Breast epithelium (tissue), 4 donors: ENCODE measurements at regions of chr12 and their contacts with region 1.

Region 1: DNA sequence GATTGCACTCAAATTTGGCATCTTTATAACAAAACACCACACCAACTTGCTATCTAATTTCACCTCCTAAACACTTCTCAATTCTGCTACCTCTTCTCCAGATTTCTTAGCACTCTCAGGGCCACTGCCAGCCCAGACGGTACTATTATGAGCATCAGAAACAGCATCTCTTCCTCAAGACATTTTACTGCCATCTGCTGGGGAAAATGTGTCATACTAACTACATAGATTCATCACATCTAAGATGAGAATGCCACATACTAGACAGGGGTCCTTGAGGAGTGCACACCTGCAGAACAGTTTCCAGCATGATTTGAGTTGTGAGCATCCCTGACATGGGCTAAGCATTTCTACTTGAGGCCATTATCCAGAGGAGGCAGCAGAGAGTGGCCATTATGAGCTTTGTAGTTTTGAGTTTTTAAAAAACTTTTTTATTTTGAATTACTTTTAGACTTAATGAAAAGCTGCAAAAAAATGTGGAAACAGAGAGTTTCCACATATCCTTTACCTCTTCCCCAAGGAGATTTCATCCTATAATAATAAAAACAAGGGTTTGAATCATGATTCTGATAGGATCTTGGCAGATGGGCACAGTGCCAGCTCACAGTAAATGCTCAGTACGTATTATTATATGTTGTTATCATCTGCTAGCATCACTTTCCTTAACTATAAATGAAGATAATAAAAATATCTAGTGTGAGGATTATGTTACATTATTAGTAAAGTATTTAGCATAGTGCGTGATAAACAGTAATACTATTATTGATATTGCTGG is 15.2 kb upstream of the GRIP1 start:
- DNase-seq: no peak
- H3K4me3 ChIP-seq: no peak overlapping the region
- H3K27ac ChIP-seq: no peak overlapping the region
- H3K4me1 ChIP-seq: no peaks in the 10 kb centered on the region
- H3K27me3 ChIP-seq: no peaks in the 10 kb centered on the region
- CTCF ChIP-seq: peak; percentile 42 to 55 (median 43)
- POLR2A ChIP-seq: no peak

Region 2: GRCh38 chr12:66144791-66145754 is 549.0 kb before region 1 on chr12:
- intact Hi-C with region 1: loop called (anchors 5 kb)
- DNase-seq: no peak
- H3K4me3 ChIP-seq: no peak overlapping the region
- H3K27ac ChIP-seq: peak overlapping the region; percentile 53 to 64
- H3K4me1 ChIP-seq: no peaks in the 10 kb centered on the region
- H3K27me3 ChIP-seq: no peaks in the 10 kb centered on the region
- CTCF ChIP-seq: peak; percentile 11 to 60 (median 52)
- POLR2A ChIP-seq: no peak

Region 3: DNA sequence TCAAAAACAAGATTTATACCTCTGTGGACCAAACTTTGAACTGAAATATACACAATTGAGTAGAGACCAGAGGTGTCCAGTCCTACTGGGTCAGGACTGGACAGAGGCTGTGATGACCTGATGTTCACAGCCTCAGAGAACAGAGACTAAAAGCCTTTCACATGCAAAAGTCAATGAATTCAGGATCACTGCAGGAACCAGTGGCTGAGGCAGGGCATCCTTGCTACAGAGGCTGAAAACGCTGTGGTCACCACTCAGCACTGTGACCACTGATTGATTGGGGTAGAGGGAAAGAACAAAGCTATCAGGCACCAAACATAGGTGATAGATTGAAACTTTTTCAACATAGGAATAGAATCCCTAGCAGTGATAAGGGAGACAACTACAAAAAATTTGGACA is 40.3 kb before region 1 on chr12:
- intact Hi-C with region 1: loop called (anchors 1 kb)
- DNase-seq: no peak
- H3K4me3 ChIP-seq: no peak overlapping the region
- H3K27ac ChIP-seq: no peak overlapping the region
- H3K4me1 ChIP-seq: no peaks in the 10 kb centered on the region
- H3K27me3 ChIP-seq: no peaks in the 10 kb centered on the region
- CTCF ChIP-seq: no peak
- POLR2A ChIP-seq: no peak

Region 4: GRCh38 chr12:66708704-66709456 is 14.8 kb after region 1 on chr12:
- intact Hi-C with region 1: no loop called
- DNase-seq: no peak
- H3K4me3 ChIP-seq: no peak overlapping the region
- H3K27ac ChIP-seq: no peak overlapping the region
- H3K4me1 ChIP-seq: no peaks in the 10 kb centered on the region
- H3K27me3 ChIP-seq: no peaks in the 10 kb centered on the region
- CTCF ChIP-seq: peak in 1 of 3 donors; percentile 29
- POLR2A ChIP-seq: no peak